IMR-90 (cell line): ENCODE measurements at regions of chr10 and their contacts with region 1.

Region 1: GRCh38 chr10:103888113-103888841 is 29.7 kb downstream of the STN1 start:
- DNase-seq: peak; percentile 91
- ATAC-seq: peak; percentile 90
- H3K4me3 ChIP-seq: no peak overlapping the region
- H3K27ac ChIP-seq: no peak overlapping the region; the same call in 1 of the 2 replicates
- H3K4me1 ChIP-seq: peaks cover 12% of the 10 kb centered on the region; the same call in 1 of the 2 replicates
- H3K27me3 ChIP-seq: no peaks in the 10 kb centered on the region
- CTCF ChIP-seq: peak; percentile 81
- POLR2A ChIP-seq: no peak
- RAD21 ChIP-seq: peak; percentile 81

Region 2: DNA sequence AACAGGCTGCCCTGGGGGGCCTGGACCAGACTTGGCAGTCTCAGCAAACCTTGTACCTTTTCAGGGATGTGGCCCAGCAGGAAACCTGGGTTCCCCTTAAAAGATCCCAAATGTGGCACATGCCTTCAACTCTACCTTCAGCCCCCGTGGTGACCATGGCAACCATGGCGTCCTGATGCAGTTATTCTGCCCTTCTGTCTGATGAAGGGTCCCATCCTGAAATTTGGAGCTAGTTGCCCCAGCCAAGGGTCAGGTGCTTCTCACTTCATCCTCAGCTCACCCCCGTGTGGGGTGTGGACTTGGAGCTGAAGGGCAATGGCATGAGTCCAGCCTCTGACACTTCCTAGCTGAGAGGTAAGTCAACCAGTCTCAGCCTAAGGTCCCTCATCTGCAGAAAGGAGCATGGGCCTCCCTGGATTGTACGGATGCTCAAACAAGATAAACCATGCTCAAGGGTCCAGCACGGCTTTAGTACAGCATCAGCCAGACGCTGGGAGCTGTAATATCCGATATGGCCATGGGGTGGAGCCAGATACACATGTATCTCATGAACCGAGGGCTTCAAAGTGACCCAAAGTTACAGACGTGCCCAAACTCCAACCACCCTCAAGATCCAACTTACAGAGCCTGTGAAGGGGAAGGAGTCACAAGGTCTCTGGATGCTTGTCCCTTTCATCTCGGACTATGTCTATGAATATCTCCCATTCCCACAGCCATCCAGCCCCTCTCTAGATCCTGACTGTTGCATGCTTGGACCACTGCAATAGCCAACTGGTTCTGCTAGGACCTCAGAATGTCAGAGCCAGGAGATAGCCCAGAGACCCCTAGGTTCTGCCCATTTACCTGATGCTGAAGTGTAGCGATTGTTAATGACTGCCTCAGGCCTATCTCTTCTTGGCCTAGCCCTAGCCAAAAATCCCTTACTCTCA is 175.4 kb before region 1 on chr10:
- CTCF ChIA-PET with region 1: interaction called, 8 read pairs
- POLR2A ChIA-PET with region 1: no interaction called
- dilution Hi-C with region 1: no loop called
- in situ Hi-C with region 1: loop called (anchors 5 kb)
- intact Hi-C with region 1: loop called (anchors 1 kb)
- DNase-seq: peak; percentile 75
- ATAC-seq: peak; percentile 77
- H3K4me3 ChIP-seq: no peak overlapping the region
- H3K27ac ChIP-seq: no peak overlapping the region
- H3K4me1 ChIP-seq: peaks cover 17% of the 10 kb centered on the region
- H3K27me3 ChIP-seq: no peaks in the 10 kb centered on the region
- CTCF ChIP-seq: peak; percentile 96
- POLR2A ChIP-seq: 0 out of 2 replicates have a peak, but pooled peaks have one; percentile 26
- RAD21 ChIP-seq: peak; percentile 97

Region 3: GRCh38 chr10:104028146-104028545 is 139.9 kb after region 1 on chr10:
- CTCF ChIA-PET with region 1: interaction called, 5 read pairs
- POLR2A ChIA-PET with region 1: no interaction called
- dilution Hi-C with region 1: no loop called
- in situ Hi-C with region 1: no loop called
- intact Hi-C with region 1: loop called (anchors 5 kb)
- DNase-seq: peak; percentile 23
- ATAC-seq: peak; percentile 85
- H3K4me3 ChIP-seq: no peak overlapping the region
- H3K27ac ChIP-seq: no peak overlapping the region
- H3K4me1 ChIP-seq: no peaks in the 10 kb centered on the region
- H3K27me3 ChIP-seq: no peaks in the 10 kb centered on the region
- CTCF ChIP-seq: peak; percentile 23; the same call in 1 of the 2 replicates
- POLR2A ChIP-seq: no peak
- RAD21 ChIP-seq: no peak

Region 4: DNA sequence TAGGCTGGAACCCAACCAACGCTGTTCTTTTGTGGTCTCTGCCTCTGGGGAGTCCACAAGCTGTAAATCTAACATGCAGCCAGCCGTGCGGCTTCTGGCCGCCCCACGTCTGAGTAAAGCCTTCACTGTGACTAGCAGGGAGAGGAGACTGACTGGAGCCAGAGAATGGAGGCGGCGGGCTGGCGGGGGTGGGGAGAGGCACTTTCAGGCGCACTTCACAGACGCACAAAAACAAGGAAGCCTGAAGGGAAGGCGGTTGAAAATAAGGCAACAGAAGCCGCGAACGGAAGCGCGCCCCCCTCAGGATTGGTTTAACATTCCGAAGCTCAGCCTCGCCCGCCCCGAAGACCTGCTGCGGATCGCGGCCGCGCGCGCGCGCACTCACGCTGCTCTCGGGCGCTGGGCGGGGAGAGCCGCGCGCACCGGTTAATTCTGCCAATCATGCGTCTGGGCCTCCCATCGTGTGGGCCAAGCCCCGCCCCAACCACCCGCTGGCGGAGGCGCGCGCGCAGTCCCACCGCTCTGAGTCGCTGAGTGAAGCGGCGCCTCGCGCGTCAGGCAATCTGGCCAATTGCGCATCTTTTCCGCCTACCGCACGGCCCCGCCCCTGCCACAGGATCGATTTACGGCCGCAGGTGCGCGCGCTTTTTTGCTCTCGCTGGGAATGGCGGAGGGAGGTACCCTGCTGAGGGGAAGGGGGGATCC is 233.4 kb after region 1 on chr10 and contains the start of gene SFR1:
- CTCF ChIA-PET with region 1: interaction called, 8 read pairs
- POLR2A ChIA-PET with region 1: no interaction called
- dilution Hi-C with region 1: no loop called
- in situ Hi-C with region 1: loop called (anchors 5 kb)
- intact Hi-C with region 1: loop called (anchors 1 kb)
- DNase-seq: peak; percentile 97
- ATAC-seq: peak; percentile 98
- H3K4me3 ChIP-seq: peak within 1 kb of the TSS; percentile 85
- H3K27ac ChIP-seq: peak within 1 kb of the TSS; percentile 93
- H3K4me1 ChIP-seq: no peaks in the 10 kb centered on the region; the same call in 1 of the 2 replicates
- H3K27me3 ChIP-seq: no peaks in the 10 kb centered on the region
- CTCF ChIP-seq: peak; percentile 82
- POLR2A ChIP-seq: peak; percentile 93
- RAD21 ChIP-seq: peak; percentile 56
- total RNA-seq, gene SFR1: 1.6 and 5.6 TPM in 2 replicates

Region 5: GRCh38 chr10:104254493-104255310 is 366.4 kb after region 1 on chr10 and contains the start of gene GSTO1:
- CTCF ChIA-PET with region 1: no interaction called
- POLR2A ChIA-PET with region 1: no interaction called
- dilution Hi-C with region 1: no loop called
- in situ Hi-C with region 1: no loop called
- intact Hi-C with region 1: loop called (anchors 5 kb)
- DNase-seq: peak; percentile 76
- ATAC-seq: peak; percentile 89
- H3K4me3 ChIP-seq: peak within 1 kb of the TSS; percentile 96
- H3K27ac ChIP-seq: peak within 1 kb of the TSS; percentile 96
- H3K4me1 ChIP-seq: peaks cover 8% of the 10 kb centered on the region
- H3K27me3 ChIP-seq: no peaks in the 10 kb centered on the region
- CTCF ChIP-seq: no peak
- POLR2A ChIP-seq: peak; percentile 76
- RAD21 ChIP-seq: no peak
- total RNA-seq, gene GSTO1: 258 and 330 TPM in 2 replicates

Region 6: GRCh38 chr10:104353325-104354048 is 465.2 kb after region 1 on chr10 and contains the start of gene CFAP58:
- CTCF ChIA-PET with region 1: no interaction called
- POLR2A ChIA-PET with region 1: no interaction called
- dilution Hi-C with region 1: no loop called
- in situ Hi-C with region 1: no loop called
- intact Hi-C with region 1: loop called (anchors 5 kb)
- DNase-seq: peak; percentile 70
- ATAC-seq: peak; percentile 87
- H3K4me3 ChIP-seq: peak within 1 kb of the TSS; percentile 53
- H3K27ac ChIP-seq: no peak within 1 kb of the TSS; the same call in 1 of the 2 replicates
- H3K4me1 ChIP-seq: peaks cover 7% of the 10 kb centered on the region; the same call in 1 of the 2 replicates
- H3K27me3 ChIP-seq: peaks cover 3% of the 10 kb centered on the region; the same call in 1 of the 2 replicates
- CTCF ChIP-seq: peak; percentile 67
- POLR2A ChIP-seq: no peak
- RAD21 ChIP-seq: no peak
- total RNA-seq, gene CFAP58: 0.36 and 0.83 TPM in 2 replicates

Region 7: DNA sequence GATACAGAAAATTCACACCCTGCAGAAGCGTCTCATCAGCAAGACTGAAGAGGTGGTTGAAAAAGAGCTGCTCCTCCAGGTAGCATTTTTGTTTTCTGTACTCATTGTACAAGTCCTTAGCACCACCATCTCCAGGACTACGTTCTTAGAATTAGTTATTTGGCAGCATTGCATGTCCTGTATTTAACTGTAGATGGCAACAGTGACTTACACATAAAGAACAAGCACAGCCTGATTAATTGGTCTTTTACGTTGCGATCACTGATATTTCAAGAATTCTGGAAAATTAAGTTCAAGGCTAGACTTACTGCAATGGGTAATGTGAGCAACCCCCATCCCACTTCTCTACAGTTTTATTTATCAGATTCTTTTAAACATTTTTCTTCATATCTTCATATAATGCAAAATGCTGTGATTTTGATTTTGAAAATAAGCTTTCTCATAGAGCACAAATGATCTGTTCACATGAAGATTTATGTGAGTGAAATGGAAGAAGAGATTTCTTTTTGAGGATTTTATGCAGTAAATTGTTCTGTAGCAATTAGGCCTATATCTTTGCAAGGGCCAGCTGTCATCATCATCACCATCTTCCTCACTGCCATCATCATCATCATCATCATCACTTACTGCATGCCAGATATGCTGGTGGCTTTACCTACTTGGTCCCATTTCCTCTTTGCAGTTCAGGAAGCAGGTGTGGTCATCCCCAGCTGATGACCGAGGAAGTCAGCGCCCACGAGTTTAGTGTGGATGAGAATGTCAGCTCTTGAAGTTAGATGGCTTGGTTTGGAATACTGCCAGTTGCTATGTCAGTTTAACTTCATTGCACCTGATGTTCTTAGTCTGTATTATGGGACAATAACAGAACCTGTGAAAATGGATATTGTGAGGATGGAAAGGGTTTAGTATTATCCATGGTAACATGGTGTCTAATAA is 518.7 kb after region 1 on chr10:
- CTCF ChIA-PET with region 1: no interaction called
- POLR2A ChIA-PET with region 1: no interaction called
- dilution Hi-C with region 1: no loop called
- in situ Hi-C with region 1: no loop called
- intact Hi-C with region 1: no loop called
- DNase-seq: peak; percentile 50
- ATAC-seq: peak; percentile 66
- H3K4me3 ChIP-seq: no peak overlapping the region
- H3K27ac ChIP-seq: no peak overlapping the region
- H3K4me1 ChIP-seq: no peaks in the 10 kb centered on the region
- H3K27me3 ChIP-seq: peaks cover 2% of the 10 kb centered on the region; the same call in 1 of the 2 replicates
- CTCF ChIP-seq: peak; percentile 55
- POLR2A ChIP-seq: no peak
- RAD21 ChIP-seq: peak; percentile 66

Region 8: GRCh38 chr10:104472493-104472892 is 584.2 kb after region 1 on chr10:
- CTCF ChIA-PET with region 1: no interaction called
- POLR2A ChIA-PET with region 1: no interaction called
- dilution Hi-C with region 1: no loop called
- in situ Hi-C with region 1: no loop called
- intact Hi-C with region 1: no loop called
- DNase-seq: peak; percentile 7
- ATAC-seq: no peak
- H3K4me3 ChIP-seq: no peak overlapping the region
- H3K27ac ChIP-seq: no peak overlapping the region
- H3K4me1 ChIP-seq: no peaks in the 10 kb centered on the region
- H3K27me3 ChIP-seq: no peaks in the 10 kb centered on the region
- CTCF ChIP-seq: no peak
- POLR2A ChIP-seq: no peak
- RAD21 ChIP-seq: no peak